ENCODE measurements at regions of chr1 and their contacts with region 1.

Region 1: GRCh38 chr1:244796718-244797406 is 38.6 kb upstream of the COX20 start:
- DNase-seq: peak; percentile 69
- H3K4me3 Mint-ChIP-seq: no peak overlapping the region
- H3K27ac Mint-ChIP-seq: no peak overlapping the region
- H3K4me1 Mint-ChIP-seq: peaks cover 5% of the 10 kb centered on the region
- H3K27me3 Mint-ChIP-seq: peaks cover 4% of the 10 kb centered on the region

Region 2: DNA sequence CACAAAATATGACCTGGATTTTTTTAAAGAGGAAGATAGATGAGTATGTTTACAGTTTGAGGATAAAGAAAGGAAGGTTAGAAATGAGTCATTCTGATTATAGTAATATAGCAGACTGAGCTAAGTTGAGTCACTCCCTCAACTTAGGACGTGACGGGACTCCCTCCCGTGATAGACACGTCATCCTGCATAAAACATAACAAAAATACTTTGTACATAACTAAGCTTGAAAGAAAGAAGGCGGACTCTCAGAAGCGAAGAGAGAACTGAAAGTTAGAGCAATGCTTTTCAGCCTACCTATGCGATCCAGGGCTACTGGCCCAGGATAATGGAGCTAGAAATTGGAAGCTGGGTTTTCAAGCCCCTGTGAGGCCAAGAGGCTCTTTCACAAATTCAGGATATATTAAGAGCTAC is 196.9 kb before region 1 on chr1:
- CTCF ChIA-PET with region 1: interaction called, 113 read pairs
- DNase-seq: peak; percentile 50
- H3K4me3 Mint-ChIP-seq: no peak overlapping the region
- H3K27ac Mint-ChIP-seq: peak overlapping the region; percentile 47
- H3K4me1 Mint-ChIP-seq: peaks cover 6% of the 10 kb centered on the region
- H3K27me3 Mint-ChIP-seq: peaks cover 5% of the 10 kb centered on the region

Region 3: GRCh38 chr1:244730153-244730933 is 66.5 kb before region 1 on chr1:
- CTCF ChIA-PET with region 1: no interaction called
- DNase-seq: peak; percentile 58
- H3K4me3 Mint-ChIP-seq: peak overlapping the region; percentile 83
- H3K27ac Mint-ChIP-seq: peak overlapping the region; percentile 87
- H3K4me1 Mint-ChIP-seq: peaks cover 28% of the 10 kb centered on the region
- H3K27me3 Mint-ChIP-seq: peaks cover 48% of the 10 kb centered on the region

Region 4: DNA sequence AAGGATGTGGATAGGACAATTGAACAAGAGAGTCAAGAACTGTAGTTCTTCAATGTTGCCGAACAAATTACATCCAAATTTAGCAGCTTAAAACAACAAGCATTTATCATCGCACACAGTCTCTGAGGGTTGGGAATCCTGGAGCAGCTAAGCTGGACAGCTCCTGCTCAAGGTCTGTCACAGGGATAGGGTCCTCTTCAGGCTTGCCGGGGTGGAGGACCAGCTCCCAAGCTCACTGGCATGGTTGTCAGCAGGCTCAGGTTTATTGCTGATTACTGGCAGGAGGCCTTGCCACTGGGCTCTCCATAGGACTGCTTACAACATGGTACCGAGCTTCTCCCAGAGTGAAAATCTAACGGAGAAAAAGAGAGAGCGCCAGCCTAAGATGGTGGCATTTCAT is 16.5 kb after region 1 on chr1:
- CTCF ChIA-PET with region 1: interaction called, 13 read pairs
- DNase-seq: no peak
- H3K4me3 Mint-ChIP-seq: no peak overlapping the region
- H3K27ac Mint-ChIP-seq: no peak overlapping the region
- H3K4me1 Mint-ChIP-seq: peaks cover 2% of the 10 kb centered on the region
- H3K27me3 Mint-ChIP-seq: peaks cover 28% of the 10 kb centered on the region

Region 5: GRCh38 chr1:244854865-244855578 is 58.2 kb after region 1 on chr1:
- CTCF ChIA-PET with region 1: no interaction called
- DNase-seq: no peak
- H3K4me3 Mint-ChIP-seq: peak overlapping the region; percentile 57
- H3K27ac Mint-ChIP-seq: peak overlapping the region; percentile 83
- H3K4me1 Mint-ChIP-seq: peaks cover 79% of the 10 kb centered on the region
- H3K27me3 Mint-ChIP-seq: no peaks in the 10 kb centered on the region